ENCODE measurements at regions of chr11 and their contacts with region 1.

Region 1: GRCh38 chr11:34105079-34105956 is at the start of gene NAT10:
- DNase-seq: peak; percentile 99
- total RNA-seq, gene NAT10: 30.9 to 34.7 TPM

Region 2: DNA sequence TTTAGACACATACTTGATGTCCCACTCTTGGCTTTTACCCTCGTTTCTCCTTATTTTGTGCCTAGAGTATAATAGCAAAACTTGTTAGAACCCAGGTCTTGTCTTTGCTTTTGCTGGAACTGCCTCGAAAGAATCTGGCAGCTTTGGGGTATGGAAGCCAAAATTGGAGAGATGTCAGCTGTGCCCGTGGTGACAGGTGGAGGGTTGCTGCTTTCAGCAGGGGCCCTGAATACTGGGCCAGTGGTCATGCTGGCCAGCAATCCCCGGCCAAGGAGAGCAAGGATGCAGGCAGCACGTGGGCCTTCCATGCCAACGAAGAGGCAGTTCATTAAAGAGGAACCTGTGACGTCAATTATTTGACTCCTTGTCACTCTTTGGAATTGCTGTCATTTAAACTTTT is 667.0 kb before region 1 on chr11:
- intact Hi-C with region 1: no loop called
- DNase-seq: no peak

Region 3: GRCh38 chr11:33996498-33997454 is 108.5 kb before region 1 on chr11:
- intact Hi-C with region 1: loop called in 1 of 2 experiments (anchors 10 kb)
- DNase-seq: no peak

Region 4: GRCh38 chr11:34051349-34052035 is 53.8 kb before region 1 on chr11 and contains the start of gene CAPRIN1:
- intact Hi-C with region 1: loop called in 1 of 2 experiments (anchors 2 kb)
- DNase-seq: peak; percentile 96
- total RNA-seq, gene CAPRIN1: 145 to 149 TPM

Measured in posterior vena cava (tissue), 2 donors.